Activated naive CD4-positive, alpha-beta T cell treated with anti-CD3 and anti-CD28 coated beads for 36 hours (primary cell): ENCODE measurements at regions of chr1 and their contacts with region 1.

Region 1: GRCh38 chr1:8878448-8879347 is at the start of gene ENO1:
- DNase-seq: peak; percentile 99
- H3K4me3 Mint-ChIP-seq: peak within 1 kb of the TSS; percentile 97
- H3K27ac Mint-ChIP-seq: peak within 1 kb of the TSS; percentile 99
- H3K4me1 Mint-ChIP-seq: peaks cover 29% of the 10 kb centered on the region
- H3K27me3 Mint-ChIP-seq: no peaks in the 10 kb centered on the region
- total RNA-seq, gene ENO1: 2,952 to 3,004 TPM

Region 2: DNA sequence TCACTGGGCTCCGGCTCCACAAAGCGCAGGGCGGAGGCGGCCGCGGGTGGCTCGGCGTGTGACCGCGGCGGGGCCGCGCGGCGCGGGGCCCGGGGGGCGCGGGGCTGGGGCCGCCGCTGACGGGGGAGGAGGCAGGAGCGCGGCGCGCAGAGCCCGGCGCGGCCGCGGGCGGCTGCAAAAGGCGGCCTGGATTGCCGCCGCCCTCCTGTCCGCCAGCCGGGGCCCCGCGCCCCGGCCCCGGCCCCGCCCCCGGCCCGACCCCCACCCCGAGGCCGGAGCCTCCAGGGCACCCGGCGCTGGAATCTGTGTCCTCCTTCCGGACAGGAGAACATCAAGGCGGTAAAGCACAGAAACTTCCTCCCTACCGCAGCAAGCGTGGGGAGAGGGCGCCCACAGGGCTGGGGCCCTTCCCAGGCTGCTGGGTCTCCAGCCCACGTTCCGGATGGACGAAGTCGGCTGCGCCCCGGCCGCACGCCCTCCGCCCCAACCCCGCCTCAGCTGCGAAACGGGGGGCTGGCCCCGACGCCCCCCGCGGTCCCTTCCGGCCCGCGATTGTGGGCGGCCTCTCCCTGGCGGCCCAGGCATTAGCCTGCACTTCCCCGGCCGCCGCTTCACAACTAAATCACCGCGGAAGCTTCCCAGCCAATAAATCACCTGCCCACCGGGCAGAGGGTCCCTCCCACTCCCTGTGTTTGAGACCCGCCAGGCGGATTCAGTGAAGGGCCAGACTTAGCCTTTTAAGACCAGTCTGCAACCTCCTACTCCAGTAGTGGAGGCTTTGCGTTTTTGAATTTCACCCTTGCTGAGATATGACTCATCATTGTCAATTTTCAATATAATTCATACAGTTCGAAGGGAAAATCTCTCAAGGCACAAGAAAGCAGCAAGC is 454.8 kb before region 1 on chr1:
- CTCF ChIA-PET with region 1: no interaction called
- intact Hi-C with region 1: loop called (anchors 5 kb)
- DNase-seq: peak; percentile 62
- H3K4me3 Mint-ChIP-seq: peak overlapping the region; percentile 85
- H3K27ac Mint-ChIP-seq: peak overlapping the region; percentile 97
- H3K4me1 Mint-ChIP-seq: peaks cover 38% of the 10 kb centered on the region
- H3K27me3 Mint-ChIP-seq: no peaks in the 10 kb centered on the region

Region 3: DNA sequence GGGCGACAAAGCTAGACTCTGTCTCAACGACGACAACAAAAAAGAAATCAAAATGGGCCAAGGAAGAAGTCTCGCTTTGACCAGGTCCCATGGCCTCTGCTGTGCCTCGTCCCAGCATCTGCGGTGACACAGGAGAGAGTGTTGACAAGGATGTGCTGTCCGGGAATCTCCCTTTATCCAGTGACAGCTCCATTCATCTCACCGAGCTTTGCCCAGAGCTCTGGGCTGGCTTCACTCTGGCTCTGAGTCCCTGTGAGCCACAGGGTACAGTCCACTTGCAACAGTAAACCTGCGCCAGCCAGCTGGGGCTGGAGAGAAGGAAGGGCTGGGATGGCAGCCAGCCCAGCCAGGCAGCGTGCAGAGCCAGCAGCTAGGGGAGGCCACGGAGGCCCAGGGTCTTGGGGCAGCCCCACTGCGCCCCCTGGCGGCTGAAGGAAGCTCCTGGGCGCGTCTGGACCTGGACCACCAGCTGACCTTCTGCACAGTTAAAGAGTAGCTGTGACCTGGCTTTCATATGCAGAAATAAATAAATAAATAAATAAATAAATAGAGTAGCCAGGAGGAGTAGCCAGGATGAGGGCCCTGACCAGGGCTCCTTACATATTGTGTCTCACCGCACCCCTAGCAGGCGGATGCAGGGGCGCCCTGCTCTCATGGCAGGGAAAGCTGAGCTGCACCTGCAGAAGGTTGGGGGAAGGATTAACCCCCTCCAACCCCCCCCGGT is 29.9 kb before region 1 on chr1:
- CTCF ChIA-PET with region 1: no interaction called
- intact Hi-C with region 1: no loop called
- DNase-seq: peak; percentile 82
- H3K4me3 Mint-ChIP-seq: no peak overlapping the region
- H3K27ac Mint-ChIP-seq: no peak overlapping the region
- H3K4me1 Mint-ChIP-seq: peaks cover 4% of the 10 kb centered on the region
- H3K27me3 Mint-ChIP-seq: no peaks in the 10 kb centered on the region

Region 4: DNA sequence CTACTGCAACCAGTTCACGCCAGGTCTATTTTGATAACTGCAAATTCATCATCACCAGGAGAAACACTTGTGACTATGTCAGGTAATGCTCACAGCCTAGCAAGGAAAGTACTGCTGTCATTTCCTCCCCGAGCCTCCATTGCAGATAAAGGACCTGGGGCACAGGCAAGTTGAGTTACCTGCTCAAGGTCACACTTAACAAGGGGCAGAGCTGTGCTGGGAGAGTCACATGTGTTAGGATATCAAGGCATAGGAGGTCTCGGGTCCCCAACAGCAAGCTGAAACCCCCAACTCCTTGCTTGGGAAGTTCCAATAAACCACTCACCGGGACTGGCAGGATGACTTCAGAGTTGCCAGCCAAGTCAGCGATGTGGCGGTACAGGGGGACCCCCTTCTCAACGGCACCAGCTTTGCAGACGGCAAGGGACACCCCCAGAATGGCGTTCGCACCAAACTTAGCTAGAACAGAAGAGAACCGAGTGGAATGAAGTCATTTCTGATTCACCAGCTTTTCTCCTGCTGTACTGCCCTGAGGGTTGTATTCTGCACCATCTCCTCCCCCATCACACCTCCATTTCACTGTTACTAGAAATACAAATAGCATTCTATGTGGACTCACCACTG is 11.8 kb before region 1 on chr1:
- CTCF ChIA-PET with region 1: interaction called, 5 read pairs
- intact Hi-C with region 1: loop called (anchors 1 kb)
- DNase-seq: peak; percentile 87
- H3K4me3 Mint-ChIP-seq: no peak overlapping the region
- H3K27ac Mint-ChIP-seq: peak overlapping the region; percentile 96
- H3K4me1 Mint-ChIP-seq: peaks cover 73% of the 10 kb centered on the region
- H3K27me3 Mint-ChIP-seq: no peaks in the 10 kb centered on the region

Region 5: GRCh38 chr1:8962812-8963530 is 84.3 kb after region 1 on chr1:
- CTCF ChIA-PET with region 1: no interaction called
- intact Hi-C with region 1: loop called (anchors 1 kb)
- DNase-seq: peak; percentile 66
- H3K4me3 Mint-ChIP-seq: peak overlapping the region; percentile 39
- H3K27ac Mint-ChIP-seq: peak overlapping the region; percentile 84
- H3K4me1 Mint-ChIP-seq: peaks cover 87% of the 10 kb centered on the region
- H3K27me3 Mint-ChIP-seq: no peaks in the 10 kb centered on the region

Region 6: DNA sequence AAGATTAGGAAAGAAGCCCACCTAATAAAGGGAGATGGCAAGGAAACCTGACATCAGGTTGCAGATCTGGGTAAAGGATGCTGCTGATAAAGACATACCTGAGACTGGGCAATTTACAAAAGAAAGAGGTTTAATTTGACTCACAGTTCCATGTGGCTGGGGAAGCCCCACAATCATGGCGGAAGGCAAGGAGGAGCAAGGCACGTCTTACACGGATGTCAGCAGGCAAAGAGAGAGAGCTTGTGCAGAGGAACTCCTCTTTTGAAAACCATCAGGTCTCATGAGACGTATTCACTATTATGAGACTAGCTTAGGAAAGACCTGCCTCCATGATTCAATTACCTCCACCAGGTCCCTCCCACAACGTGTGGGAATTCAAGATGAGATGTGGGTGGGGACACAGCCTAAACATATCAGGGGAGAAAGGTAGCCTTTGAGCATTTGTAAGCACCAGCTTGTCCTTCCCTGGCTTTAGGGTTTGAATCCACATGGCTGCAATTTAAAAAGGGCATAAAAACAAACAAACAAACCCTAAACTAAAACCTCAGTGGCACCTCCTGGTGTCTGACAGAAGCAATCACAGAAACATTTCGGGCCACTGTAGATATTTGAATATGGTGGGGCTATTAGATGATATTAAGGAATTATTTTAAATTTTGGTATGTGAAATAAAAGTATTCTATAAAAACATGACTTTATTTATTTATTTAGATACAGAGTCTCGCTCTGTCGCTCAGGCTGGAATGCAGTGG is 114.4 kb after region 1 on chr1:
- CTCF ChIA-PET with region 1: no interaction called
- intact Hi-C with region 1: no loop called
- DNase-seq: peak; percentile 39
- H3K4me3 Mint-ChIP-seq: no peak overlapping the region
- H3K27ac Mint-ChIP-seq: no peak overlapping the region
- H3K4me1 Mint-ChIP-seq: peaks cover 8% of the 10 kb centered on the region
- H3K27me3 Mint-ChIP-seq: no peaks in the 10 kb centered on the region

Region 7: GRCh38 chr1:9128520-9129265 is 250.0 kb after region 1 on chr1 and contains the start of gene GPR157:
- CTCF ChIA-PET with region 1: no interaction called
- intact Hi-C with region 1: loop called (anchors 1 kb)
- DNase-seq: peak; percentile 84
- H3K4me3 Mint-ChIP-seq: peak within 1 kb of the TSS; percentile 91
- H3K27ac Mint-ChIP-seq: no peak within 1 kb of the TSS
- H3K4me1 Mint-ChIP-seq: peaks cover 34% of the 10 kb centered on the region
- H3K27me3 Mint-ChIP-seq: no peaks in the 10 kb centered on the region
- total RNA-seq, gene GPR157: 0.94 to 2.3 TPM

Region 8: DNA sequence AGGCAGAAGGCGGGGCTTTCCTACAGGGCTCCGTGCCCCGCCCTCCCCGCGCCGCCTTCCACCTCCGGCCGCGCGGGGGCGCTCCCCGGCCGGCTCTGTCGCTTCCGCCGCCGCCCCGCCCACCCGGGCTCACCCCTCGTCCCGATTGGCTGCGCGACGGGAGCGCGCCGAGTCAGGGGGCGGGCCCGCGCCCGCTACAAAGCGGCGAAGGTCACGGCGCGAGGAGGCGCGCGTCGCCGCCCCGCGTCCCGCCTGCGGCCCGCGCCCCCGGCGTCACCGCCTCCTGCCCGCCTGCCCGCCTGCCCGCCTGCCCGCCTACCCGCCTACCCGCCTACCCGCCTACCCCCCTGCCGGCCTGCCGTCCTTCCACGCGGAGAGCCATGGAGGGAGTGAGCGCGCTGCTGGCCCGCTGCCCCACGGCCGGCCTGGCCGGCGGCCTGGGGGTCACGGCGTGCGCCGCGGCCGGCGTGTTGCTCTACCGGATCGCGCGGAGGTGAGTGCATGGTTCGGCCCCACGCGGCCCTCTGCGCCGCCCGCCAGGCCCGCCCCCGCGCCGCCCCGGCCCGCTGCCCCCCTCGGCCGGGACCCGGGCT is 709.9 kb after region 1 on chr1 and contains the start of gene TMEM201:
- CTCF ChIA-PET with region 1: no interaction called
- intact Hi-C with region 1: no loop called
- DNase-seq: peak; percentile 92
- H3K4me3 Mint-ChIP-seq: peak within 1 kb of the TSS; percentile 78
- H3K27ac Mint-ChIP-seq: no peak within 1 kb of the TSS
- H3K4me1 Mint-ChIP-seq: peaks cover 38% of the 10 kb centered on the region
- H3K27me3 Mint-ChIP-seq: no peaks in the 10 kb centered on the region
- total RNA-seq, gene TMEM201: 9.1 to 9.8 TPM